ENCODE measurements at regions of chr3 and their contacts with region 1.

Region 1: GRCh38 chr3:18758047-18758704 is 333.0 kb upstream of the SATB1 start:
- DNase-seq: peak; percentile 41
- ATAC-seq: peak; percentile 96
- H3K4me3 Mint-ChIP-seq: no peak overlapping the region
- H3K27ac Mint-ChIP-seq: peak overlapping the region; percentile 79
- H3K4me1 Mint-ChIP-seq: peaks cover 43% of the 10 kb centered on the region
- H3K27me3 Mint-ChIP-seq: no peaks in the 10 kb centered on the region
- CTCF ChIP-seq: peak; percentile 83

Region 2: DNA sequence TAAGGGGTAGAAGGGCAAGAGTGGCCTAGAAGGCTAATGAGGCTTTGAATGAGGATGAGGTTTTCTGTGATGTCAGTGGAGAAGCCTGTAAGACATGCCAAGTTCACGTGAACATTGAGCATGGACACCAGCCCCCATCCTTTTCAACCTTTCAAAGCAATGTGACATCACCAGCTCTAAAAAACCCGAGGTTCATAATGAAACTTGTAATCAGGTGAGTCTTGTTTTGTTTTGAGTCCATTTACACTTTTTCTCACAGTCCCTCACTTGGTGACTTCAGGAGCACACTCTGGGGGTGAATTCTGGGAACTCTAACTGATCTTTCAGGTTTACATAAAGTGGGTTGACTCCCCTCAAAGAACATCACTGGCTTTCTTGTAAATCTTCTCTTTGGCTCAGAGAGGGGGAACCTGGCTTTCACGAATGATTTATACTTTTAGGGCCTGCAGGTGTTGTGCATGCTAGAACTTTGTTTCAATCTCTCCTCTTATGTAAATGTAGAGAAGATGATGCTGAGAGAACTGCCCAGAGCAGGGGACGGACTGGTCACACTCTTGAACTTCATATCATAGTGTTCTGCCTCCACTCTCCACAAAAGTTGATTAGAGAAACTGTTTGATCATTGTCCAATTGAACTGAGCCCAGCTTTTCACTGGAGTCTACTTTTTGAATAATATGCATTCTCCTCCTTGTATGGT is 108.4 kb before region 1 on chr3:
- CTCF ChIA-PET with region 1: interaction called, 13 read pairs
- POLR2A ChIA-PET with region 1: interaction called, 3 read pairs
- intact Hi-C with region 1: no loop called
- DNase-seq: peak; percentile 82
- ATAC-seq: peak; percentile 88
- H3K4me3 Mint-ChIP-seq: peak overlapping the region; percentile 6
- H3K27ac Mint-ChIP-seq: peak overlapping the region; percentile 94
- H3K4me1 Mint-ChIP-seq: peaks cover 72% of the 10 kb centered on the region
- H3K27me3 Mint-ChIP-seq: no peaks in the 10 kb centered on the region
- CTCF ChIP-seq: no peak

Region 3: DNA sequence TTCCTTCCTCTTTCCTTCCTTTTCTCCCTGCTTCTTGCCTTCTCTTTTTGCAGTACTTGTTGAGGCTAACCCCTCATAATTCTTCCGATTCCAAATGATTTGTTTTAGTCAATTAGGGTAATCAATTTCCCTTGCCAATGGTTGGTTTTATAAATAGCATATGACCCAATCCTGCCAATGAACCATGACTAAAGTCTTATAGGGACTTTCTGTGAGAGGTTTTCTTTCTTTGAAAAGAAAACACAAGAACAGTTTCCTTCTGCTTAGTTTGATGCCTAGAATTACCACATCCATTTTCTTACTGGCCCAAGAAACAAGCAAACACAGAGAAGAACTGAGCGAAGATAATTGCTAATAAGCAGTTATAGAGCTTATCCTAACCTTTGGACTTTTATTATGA is 40.6 kb before region 1 on chr3:
- CTCF ChIA-PET with region 1: interaction called, 10 read pairs
- POLR2A ChIA-PET with region 1: interaction called, 4 read pairs
- intact Hi-C with region 1: no loop called
- DNase-seq: no peak
- ATAC-seq: peak; percentile 54
- H3K4me3 Mint-ChIP-seq: no peak overlapping the region
- H3K27ac Mint-ChIP-seq: peak overlapping the region; percentile 97
- H3K4me1 Mint-ChIP-seq: peaks cover 74% of the 10 kb centered on the region
- H3K27me3 Mint-ChIP-seq: no peaks in the 10 kb centered on the region
- CTCF ChIP-seq: no peak

Region 4: DNA sequence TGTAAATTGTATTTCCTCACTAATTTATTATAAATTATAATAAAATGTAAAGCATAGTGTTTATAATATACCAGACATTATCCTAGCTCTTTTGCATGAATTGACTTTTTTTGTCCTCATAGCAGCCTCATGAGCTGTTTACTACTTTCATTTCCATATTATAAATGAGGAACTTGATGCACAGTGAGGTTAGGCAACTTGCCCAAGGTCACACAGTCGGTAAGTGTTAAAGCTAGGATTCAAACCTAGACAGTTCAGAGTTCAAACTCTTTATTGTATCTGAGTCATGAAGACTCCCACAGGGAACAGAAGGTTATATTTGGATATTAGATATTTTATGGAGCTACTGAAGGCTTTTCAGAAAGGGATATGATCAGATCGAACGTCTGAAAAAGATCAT is 10.8 kb before region 1 on chr3:
- CTCF ChIA-PET with region 1: interaction called, 26 read pairs
- POLR2A ChIA-PET with region 1: no interaction called
- intact Hi-C with region 1: no loop called
- DNase-seq: no peak
- ATAC-seq: no peak
- H3K4me3 Mint-ChIP-seq: no peak overlapping the region
- H3K27ac Mint-ChIP-seq: no peak overlapping the region
- H3K4me1 Mint-ChIP-seq: peaks cover 82% of the 10 kb centered on the region
- H3K27me3 Mint-ChIP-seq: no peaks in the 10 kb centered on the region
- CTCF ChIP-seq: no peak

Region 5: DNA sequence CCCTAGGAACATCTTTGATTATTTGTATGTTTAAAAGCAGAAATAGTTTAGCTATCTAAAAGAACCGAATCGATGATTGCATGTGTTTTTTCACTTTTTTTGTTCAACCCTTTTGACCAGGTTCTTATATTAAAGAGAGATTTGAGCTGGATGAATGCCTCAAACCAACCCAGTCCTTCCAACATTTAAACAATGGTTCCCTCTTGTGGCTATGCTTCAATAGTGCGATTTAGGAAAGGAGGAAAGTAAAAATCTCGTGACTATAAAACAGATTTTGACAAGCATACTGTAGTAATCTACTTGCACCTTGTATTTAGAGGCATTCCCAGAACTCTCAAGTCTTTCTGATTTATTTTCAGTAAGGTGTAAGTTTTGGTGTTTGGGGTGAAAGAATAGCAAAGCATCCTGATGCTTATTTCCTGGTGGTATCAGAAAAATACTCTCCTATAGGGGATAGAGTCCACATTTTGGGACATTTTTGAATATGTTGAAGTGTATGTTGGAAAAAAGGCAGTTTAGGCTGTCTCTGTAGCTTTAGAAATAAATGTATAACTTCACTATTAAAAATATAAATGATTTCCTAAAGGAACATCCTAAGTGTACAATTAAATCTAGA is 230.5 kb after region 1 on chr3:
- CTCF ChIA-PET with region 1: interaction called, 6 read pairs
- POLR2A ChIA-PET with region 1: no interaction called
- intact Hi-C with region 1: loop called (anchors 5 kb)
- DNase-seq: no peak
- ATAC-seq: peak; percentile 72
- H3K4me3 Mint-ChIP-seq: peak overlapping the region; percentile 58
- H3K27ac Mint-ChIP-seq: no peak overlapping the region
- H3K4me1 Mint-ChIP-seq: peaks cover 18% of the 10 kb centered on the region
- H3K27me3 Mint-ChIP-seq: peaks cover 16% of the 10 kb centered on the region
- CTCF ChIP-seq: peak; percentile 78

Measured in activated CD8-positive, alpha-beta T cell treated with anti-CD3 and anti-CD28 coated beads for 36 hours (primary cell).